Activated B cell treated with CpG ODN at 0.5 μM for 24 hours (primary cell): ENCODE measurements at regions of chr11 and their contacts with region 1.

Region 1: DNA sequence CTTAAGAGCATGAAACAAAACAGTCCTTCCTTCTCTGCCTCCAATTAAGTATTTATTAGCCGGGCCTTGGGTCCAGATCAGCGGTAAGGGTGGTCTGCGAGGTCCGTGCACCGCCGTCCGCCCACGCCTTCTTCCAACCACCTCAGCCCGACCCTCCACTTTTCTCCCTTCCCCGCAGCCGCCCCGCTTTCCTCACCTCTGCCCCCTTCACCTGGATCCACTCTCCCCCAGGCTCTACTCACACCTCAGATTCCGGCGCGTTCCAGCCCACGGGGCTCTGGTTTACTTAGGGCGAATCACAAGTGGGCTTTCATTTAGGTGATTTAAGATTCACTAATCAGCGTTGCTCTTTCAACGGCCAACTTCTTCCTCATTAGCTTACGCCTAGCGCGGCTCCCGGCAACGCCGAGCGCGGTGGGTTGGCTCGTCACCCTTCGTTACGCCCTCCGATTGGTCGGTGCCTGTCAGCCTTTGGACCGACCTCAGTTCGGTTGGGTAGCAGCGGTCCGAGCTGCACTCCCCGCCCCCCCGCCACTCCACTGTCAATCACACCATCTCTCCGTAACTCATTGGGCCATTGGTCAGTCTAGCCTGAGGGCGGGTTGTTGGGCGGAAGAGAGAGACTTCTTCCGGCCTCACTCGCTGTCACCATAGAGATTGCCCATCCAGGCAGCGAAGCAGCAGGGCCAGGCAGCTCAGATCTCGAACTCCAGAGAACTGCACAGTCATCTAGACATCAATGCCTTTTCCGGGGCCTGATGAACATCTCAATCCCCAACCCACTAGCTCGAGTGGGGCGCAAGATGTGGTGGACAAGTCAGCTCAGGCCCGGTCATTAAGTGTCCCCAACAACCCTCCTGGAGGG is at the start of gene TMEM218:
- DNase-seq: peak; percentile 82
- ATAC-seq: peak; percentile 96
- H3K4me3 Mint-ChIP-seq: peak within 1 kb of the TSS; percentile 98
- H3K27ac Mint-ChIP-seq: peak within 1 kb of the TSS; percentile 97
- H3K4me1 Mint-ChIP-seq: peaks cover 23% of the 10 kb centered on the region
- H3K27me3 Mint-ChIP-seq: peaks cover 4% of the 10 kb centered on the region
- CTCF ChIP-seq: no peak
- total RNA-seq, gene TMEM218: 18.8 and 20.1 TPM in 2 replicates

Region 2: DNA sequence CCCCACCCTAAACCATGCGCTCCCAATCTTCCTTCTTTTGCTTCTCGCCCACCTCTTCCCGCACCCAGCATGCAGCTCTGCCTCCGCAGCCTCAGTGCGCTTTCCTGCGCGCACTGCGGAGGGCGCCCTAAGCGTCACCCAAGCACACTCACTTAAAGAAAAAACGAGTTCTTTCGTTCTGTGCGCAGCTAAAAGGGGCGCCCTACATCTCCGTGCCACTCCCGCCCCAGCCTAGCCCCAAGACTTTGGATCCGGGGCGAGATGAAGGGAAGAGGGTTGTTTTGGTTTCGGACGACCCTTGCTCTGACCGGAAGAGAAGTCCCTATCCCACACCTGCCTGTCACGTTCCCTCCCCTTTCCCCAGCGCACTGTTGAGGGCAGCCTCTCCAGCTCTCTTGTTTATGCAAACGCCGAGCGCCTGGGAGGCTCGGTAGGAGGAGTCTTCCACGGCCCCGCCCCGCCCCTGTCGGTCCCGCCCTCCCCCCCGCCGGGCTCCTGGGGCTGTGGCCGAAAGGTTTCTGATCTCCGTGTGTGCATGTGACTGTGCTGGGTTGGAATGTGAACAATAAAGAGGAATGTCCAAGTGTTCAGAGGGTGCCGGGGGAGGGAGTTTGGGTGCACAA is 364.8 kb before region 1 on chr11:
- CTCF ChIA-PET with region 1: no interaction called
- POLR2A ChIA-PET with region 1: no interaction called
- intact Hi-C with region 1: loop called (anchors 5 kb)
- DNase-seq: peak; percentile 73
- ATAC-seq: peak; percentile 89
- H3K4me3 Mint-ChIP-seq: peak overlapping the region; percentile 97
- H3K27ac Mint-ChIP-seq: peak overlapping the region; percentile 93
- H3K4me1 Mint-ChIP-seq: peaks cover 37% of the 10 kb centered on the region
- H3K27me3 Mint-ChIP-seq: peaks cover 2% of the 10 kb centered on the region
- CTCF ChIP-seq: no peak

Region 3: GRCh38 chr11:124976994-124977393 is 134.6 kb before region 1 on chr11:
- CTCF ChIA-PET with region 1: no interaction called
- POLR2A ChIA-PET with region 1: no interaction called
- intact Hi-C with region 1: no loop called
- DNase-seq: no peak
- ATAC-seq: no peak
- H3K4me3 Mint-ChIP-seq: no peak overlapping the region
- H3K27ac Mint-ChIP-seq: no peak overlapping the region
- H3K4me1 Mint-ChIP-seq: no peaks in the 10 kb centered on the region
- H3K27me3 Mint-ChIP-seq: no peaks in the 10 kb centered on the region
- CTCF ChIP-seq: no peak

Region 4: DNA sequence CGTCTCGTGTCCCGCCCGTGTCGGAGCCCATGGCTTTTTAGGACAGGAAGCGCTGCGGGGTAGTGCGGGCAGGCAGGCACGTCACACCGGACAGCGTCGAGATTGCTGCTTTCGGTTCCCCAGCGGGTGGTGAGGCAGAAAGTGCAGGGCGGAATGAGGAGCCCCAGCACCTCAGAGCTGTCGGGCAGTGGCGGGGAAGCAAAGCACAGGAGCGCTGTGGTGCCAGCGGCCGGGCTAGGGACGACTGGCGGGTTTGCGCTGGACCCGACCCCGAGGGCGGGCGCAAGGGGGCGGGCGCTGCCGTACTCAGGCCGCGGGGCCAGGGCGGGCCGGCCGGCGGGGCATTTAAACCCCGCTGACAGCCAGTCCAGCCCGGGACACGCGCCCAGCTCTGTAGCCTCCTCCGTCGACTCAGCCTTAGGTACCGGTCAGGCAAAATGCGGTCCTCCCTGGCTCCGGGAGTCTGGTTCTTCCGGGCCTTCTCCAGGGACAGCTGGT is 48.6 kb before region 1 on chr11 and contains the start of gene SLC37A2:
- CTCF ChIA-PET with region 1: no interaction called
- POLR2A ChIA-PET with region 1: interaction called, 38 read pairs
- intact Hi-C with region 1: loop called (anchors 1 kb)
- DNase-seq: peak; percentile 64
- ATAC-seq: peak; percentile 95
- H3K4me3 Mint-ChIP-seq: peak within 1 kb of the TSS; percentile 86
- H3K27ac Mint-ChIP-seq: peak within 1 kb of the TSS; percentile 83
- H3K4me1 Mint-ChIP-seq: peaks cover 23% of the 10 kb centered on the region
- H3K27me3 Mint-ChIP-seq: peaks cover 9% of the 10 kb centered on the region
- CTCF ChIP-seq: no peak
- total RNA-seq, gene SLC37A2: 21.3 and 27.5 TPM in 2 replicates

Region 5: DNA sequence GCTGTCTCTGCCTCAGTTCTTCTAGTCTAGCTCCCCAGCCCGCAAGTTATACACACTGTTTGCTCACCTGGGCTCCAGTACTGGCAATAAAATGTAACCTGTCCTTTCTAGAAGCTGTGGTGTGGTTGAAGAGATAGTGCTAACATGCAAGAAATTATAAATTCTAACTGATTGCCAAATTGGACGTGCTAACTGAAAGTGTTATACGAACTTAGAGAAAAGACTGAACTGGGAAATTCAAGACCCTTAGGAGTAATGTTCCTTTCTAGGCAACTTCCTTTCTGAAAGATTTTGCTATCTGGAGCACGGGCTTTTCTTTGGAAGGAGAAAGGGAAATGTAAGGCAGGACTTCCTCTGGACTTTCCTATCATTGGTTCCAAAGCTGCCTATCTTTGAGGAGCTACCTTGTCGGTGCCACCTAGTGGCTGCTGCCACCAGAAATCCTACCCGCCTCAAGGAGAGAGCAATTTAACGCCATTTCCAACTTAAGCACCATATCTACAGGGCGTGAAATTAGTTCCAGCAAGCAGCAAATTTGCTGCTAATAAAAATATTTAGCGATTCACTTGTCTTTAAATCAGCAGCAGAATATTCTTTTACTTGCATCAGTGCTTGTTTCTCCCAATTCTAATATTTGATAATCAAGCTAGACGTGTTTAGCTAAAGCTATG is 12.5 kb after region 1 on chr11:
- CTCF ChIA-PET with region 1: interaction called, 27 read pairs
- POLR2A ChIA-PET with region 1: interaction called, 19 read pairs
- intact Hi-C with region 1: loop called (anchors 1 kb)
- DNase-seq: no peak
- ATAC-seq: peak; percentile 71
- H3K4me3 Mint-ChIP-seq: peak overlapping the region; percentile 26
- H3K27ac Mint-ChIP-seq: no peak overlapping the region
- H3K4me1 Mint-ChIP-seq: peaks cover 14% of the 10 kb centered on the region
- H3K27me3 Mint-ChIP-seq: peaks cover 32% of the 10 kb centered on the region
- CTCF ChIP-seq: no peak

Region 6: GRCh38 chr11:125329786-125330185 is 218.2 kb after region 1 on chr11:
- CTCF ChIA-PET with region 1: no interaction called
- POLR2A ChIA-PET with region 1: no interaction called
- intact Hi-C with region 1: no loop called
- DNase-seq: no peak
- ATAC-seq: no peak
- H3K4me3 Mint-ChIP-seq: no peak overlapping the region
- H3K27ac Mint-ChIP-seq: no peak overlapping the region
- H3K4me1 Mint-ChIP-seq: no peaks in the 10 kb centered on the region
- H3K27me3 Mint-ChIP-seq: peaks cover 29% of the 10 kb centered on the region
- CTCF ChIP-seq: no peak

Region 7: DNA sequence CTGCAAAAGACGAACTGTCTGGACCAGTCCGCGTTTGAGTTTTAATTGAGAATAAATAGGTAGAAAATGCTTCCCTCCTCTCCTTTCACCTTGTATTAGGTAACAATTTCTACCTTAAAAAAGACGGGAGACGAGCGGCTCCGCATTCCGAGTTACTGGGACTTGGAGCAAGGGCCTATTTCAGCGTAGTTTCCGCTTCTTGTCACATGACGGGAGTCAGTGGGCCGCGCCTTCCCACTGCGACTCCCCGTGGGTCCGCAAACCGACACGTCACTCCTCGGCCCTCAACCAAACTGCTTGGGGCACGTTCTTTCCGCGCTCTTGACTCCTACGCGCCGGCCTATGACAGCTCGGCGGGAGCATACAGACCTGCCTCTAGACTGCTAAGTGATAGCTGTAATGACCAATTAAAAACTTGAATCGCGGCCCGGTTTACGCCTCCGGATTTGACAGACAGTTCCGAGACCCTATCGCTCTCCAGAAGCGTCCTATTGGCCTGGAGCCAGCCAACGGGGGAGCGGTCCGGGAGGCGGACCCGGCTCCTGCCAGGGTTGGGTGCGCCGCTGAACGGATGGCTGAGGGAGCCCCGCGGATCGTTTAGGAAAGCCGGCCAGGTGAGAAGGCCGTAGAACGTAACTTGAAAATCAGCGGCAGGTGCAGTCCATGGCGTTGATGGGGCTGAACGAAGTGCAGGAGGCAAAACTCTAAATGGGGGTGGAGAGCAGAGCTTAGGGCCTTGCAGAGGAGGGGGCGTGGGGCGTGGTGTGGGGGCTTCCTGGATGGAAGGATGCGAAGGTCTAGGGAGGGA is 480.9 kb after region 1 on chr11 and contains the start of gene STT3A:
- CTCF ChIA-PET with region 1: no interaction called
- POLR2A ChIA-PET with region 1: interaction called, 7 read pairs
- intact Hi-C with region 1: loop called (anchors 1 kb)
- DNase-seq: peak; percentile 90
- ATAC-seq: peak; percentile 92
- H3K4me3 Mint-ChIP-seq: peak within 1 kb of the TSS; percentile 95
- H3K27ac Mint-ChIP-seq: peak within 1 kb of the TSS; percentile 99
- H3K4me1 Mint-ChIP-seq: peaks cover 58% of the 10 kb centered on the region
- H3K27me3 Mint-ChIP-seq: no peaks in the 10 kb centered on the region
- CTCF ChIP-seq: no peak
- total RNA-seq, gene STT3A: 79.4 and 86.5 TPM in 2 replicates